ENCODE measurements at regions of chr3 and their contacts with region 1.

Region 1: GRCh38 chr3:128617557-128618397 is 32.8 kb downstream of the RPN1 start:
- DNase-seq: peak; percentile 100
- ATAC-seq: peak; percentile 86
- H3K4me3 Mint-ChIP-seq: peak overlapping the region; percentile 92
- H3K27ac Mint-ChIP-seq: peak overlapping the region; percentile 97
- H3K4me1 Mint-ChIP-seq: peaks cover 33% of the 10 kb centered on the region
- H3K27me3 Mint-ChIP-seq: no peaks in the 10 kb centered on the region

Region 2: DNA sequence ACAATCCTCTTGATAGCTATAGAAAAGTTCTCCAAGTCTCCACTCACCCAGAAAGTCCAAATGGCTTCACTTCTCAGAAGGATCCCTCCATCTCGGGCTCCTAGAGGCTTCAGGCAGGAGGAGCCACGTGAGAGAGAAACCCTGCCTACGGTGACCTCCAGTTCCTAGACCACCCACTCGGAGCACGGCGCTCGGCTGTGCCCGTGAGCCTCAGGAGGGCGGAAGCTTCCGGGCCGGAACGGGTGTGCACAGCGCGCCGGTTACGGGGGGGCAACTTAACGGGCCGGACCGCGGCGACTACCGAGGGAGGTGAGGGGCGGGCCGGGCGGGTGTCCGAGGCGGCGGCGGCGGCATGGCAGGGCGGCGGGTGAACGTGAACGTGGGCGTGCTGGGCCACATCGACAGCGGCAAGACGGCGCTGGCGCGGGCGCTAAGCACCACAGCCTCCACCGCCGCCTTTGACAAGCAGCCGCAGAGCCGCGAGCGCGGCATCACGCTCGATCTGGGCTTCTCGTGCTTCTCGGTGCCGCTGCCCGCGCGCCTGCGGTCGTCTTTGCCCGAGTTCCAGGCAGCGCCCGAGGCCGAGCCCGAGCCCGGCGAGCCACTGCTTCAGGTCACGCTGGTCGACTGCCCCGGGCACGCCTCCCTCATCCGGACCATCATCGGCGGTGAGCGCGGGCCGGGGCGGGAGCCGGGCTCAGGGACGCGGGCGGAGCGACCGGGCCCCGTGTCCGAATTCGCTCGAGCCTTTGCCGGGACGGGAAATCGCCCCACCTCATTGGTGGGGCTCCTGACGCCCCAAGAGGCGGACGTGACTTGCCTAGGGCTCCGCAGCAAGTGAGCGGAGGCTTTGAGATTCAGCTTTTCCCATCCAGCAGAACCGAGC is 464.4 kb before region 1 on chr3 and contains the start of gene EEFSEC:
- CTCF ChIA-PET with region 1: no interaction called
- POLR2A ChIA-PET with region 1: no interaction called
- intact Hi-C with region 1: loop called in 1 of 2 experiments (anchors 2 kb)
- DNase-seq: peak; percentile 91
- ATAC-seq: peak; percentile 95
- H3K4me3 Mint-ChIP-seq: peak within 1 kb of the TSS; percentile 80
- H3K27ac Mint-ChIP-seq: peak within 1 kb of the TSS; percentile 85
- H3K4me1 Mint-ChIP-seq: peaks cover 25% of the 10 kb centered on the region
- H3K27me3 Mint-ChIP-seq: no peaks in the 10 kb centered on the region
- total RNA-seq, gene EEFSEC: 19.6 to 20.7 TPM

Region 3: GRCh38 chr3:128655531-128655930 is 37.8 kb after region 1 on chr3:
- CTCF ChIA-PET with region 1: interaction called, 11 read pairs
- POLR2A ChIA-PET with region 1: interaction called, 4 read pairs
- intact Hi-C with region 1: loop called (anchors 1 kb)
- DNase-seq: no peak
- ATAC-seq: no peak
- H3K4me3 Mint-ChIP-seq: no peak overlapping the region
- H3K27ac Mint-ChIP-seq: peak overlapping the region; percentile 6
- H3K4me1 Mint-ChIP-seq: peaks cover 9% of the 10 kb centered on the region
- H3K27me3 Mint-ChIP-seq: no peaks in the 10 kb centered on the region

Region 4: DNA sequence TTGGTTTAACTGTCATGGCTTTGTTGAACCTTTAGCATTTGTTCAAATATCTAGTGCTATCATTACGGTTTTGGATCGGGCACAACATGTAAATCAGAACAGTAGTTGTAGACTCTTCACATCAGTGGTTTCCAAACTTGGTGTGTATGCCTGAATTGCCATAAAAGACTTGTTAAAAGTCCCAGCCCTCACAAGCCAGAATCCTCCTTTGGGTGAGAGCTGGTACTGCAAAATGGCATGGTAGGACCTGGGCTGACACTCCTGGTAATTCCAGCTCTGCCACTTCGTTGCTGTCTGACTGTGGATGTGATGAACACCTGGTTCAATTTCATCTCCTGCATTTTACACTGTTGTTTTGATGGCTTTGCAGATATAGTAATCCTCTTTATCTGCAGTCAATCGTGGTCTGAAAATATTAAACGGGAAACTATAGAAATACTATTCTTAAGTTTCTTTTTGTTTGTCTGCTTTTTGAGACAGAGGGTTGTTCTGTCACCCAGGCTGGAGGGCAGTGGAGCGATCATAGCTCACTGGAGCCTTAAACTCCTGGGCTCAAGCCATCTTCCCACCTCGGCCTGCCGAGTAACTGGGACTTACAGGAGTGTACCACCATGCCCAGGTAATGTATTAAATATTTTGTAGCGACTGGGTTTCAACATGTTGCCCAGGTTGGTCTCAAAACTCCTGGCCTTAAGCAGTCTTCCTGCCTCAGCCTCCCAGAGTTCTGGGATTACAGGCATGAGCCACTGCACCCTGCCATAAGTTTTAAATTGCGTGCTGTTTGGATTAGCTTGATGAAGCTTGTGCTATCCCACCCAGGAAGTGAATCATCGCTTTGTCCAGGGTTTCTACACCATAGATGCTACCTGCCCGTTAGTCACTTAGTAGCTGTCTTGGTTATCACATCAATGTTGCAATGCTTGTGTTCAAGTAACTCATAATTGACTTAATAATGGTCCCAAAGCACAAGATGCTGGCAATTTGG is 169.8 kb after region 1 on chr3:
- CTCF ChIA-PET with region 1: interaction called, 4 read pairs
- POLR2A ChIA-PET with region 1: no interaction called
- intact Hi-C with region 1: loop called in 1 of 2 experiments (anchors 5 kb)
- DNase-seq: peak; percentile 62
- ATAC-seq: peak; percentile 73
- H3K4me3 Mint-ChIP-seq: peak overlapping the region; percentile 73
- H3K27ac Mint-ChIP-seq: peak overlapping the region; percentile 100
- H3K4me1 Mint-ChIP-seq: peaks cover 97% of the 10 kb centered on the region
- H3K27me3 Mint-ChIP-seq: no peaks in the 10 kb centered on the region

Region 5: DNA sequence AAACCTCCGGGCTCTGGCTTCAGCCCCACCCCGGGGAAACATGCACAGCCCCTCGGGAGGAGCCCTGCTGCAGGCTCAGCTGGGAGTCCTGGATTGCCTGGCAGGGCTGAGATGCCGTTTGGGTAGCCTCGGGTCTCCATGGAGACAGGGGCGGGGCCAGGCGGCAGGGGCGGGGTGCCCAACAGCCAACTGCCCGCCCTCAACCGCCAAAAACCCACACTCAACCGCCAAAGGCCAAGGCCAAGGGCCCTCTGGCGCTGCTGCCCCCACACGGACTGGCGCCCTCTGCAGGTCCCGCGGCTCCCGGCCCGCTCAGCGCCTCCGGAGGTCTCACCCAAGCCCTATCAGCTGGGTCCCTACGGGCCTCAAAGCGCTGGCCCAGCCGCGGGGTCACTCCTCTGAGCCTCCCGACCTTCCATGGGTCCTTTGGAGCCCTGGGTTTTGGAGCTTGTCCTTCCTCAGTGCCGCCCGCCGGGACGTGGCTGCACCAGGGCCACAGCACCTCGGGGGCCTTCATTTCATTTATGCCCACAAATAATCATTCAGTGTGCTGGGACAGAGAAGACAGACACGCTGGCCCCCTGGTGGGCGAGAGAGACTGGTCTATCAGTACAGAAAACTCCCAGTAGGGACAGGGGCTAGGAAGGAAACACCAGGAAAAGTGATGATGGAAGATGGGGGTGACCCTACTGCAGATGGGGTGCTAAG is 228.2 kb after region 1 on chr3:
- CTCF ChIA-PET with region 1: interaction called, 3 read pairs
- POLR2A ChIA-PET with region 1: no interaction called
- intact Hi-C with region 1: loop called in 1 of 2 experiments (anchors 1 kb)
- DNase-seq: peak; percentile 93
- ATAC-seq: peak; percentile 84
- H3K4me3 Mint-ChIP-seq: peak overlapping the region; percentile 62
- H3K27ac Mint-ChIP-seq: peak overlapping the region; percentile 95
- H3K4me1 Mint-ChIP-seq: peaks cover 20% of the 10 kb centered on the region
- H3K27me3 Mint-ChIP-seq: no peaks in the 10 kb centered on the region

Region 6: DNA sequence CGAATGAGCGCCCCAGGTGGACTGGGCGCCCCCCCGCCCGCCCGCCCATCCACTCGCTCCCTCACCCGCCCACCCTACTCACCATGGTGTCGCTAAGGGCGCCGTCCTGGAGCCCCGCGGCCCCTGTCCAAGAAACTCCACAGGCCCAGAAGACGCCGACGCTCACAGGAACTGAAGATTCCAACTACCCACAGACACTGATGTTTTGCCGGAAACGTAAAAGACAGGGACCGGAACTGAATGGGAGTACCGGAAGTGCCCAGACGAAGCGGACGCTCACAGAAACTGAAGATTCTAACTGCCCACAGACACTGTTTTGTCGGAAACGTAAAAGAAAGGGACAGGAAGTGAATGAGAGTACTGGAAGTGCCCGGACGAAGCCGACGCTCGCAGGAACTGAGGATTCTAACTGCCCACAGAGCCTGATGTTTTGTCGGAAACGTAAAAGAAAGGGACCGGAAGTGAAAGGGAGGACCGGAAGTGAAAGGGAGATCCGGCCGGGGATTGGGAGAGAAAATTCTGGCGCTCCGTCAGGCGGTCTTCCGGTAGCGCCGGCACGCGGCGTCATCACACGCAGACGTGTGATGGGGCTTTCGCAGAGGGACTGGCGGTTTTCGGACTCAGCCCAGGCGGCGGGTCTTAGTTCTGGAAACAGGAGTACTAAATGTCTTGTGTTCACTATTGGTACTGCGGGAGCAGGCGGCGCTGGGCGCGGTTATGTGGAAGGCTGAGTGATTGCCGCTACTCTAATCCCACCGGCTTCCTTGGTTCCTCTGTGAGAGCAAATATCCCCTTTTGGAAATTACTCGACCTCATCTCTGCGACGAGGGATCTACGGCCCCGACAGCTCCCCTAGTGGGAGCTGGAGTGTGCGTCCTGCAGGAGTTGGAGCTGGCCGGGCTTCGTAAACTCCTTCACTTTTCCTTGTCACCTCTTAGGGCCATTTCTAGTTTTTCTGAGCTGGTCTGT is 543.4 kb after region 1 on chr3 and contains the start of gene ISY1:
- CTCF ChIA-PET with region 1: no interaction called
- POLR2A ChIA-PET with region 1: no interaction called
- intact Hi-C with region 1: loop called in 1 of 2 experiments (anchors 1 kb)
- DNase-seq: peak; percentile 93
- ATAC-seq: peak; percentile 81
- H3K4me3 Mint-ChIP-seq: peak within 1 kb of the TSS; percentile 93
- H3K27ac Mint-ChIP-seq: peak within 1 kb of the TSS; percentile 98
- H3K4me1 Mint-ChIP-seq: peaks cover 30% of the 10 kb centered on the region
- H3K27me3 Mint-ChIP-seq: no peaks in the 10 kb centered on the region
- total RNA-seq, gene ISY1: 44.9 to 65.5 TPM

Measured in activated CD4-positive, alpha-beta T cell treated with anti-CD3 and anti-CD28 coated beads for 36 hours (primary cell).